ENCODE measurements at regions of chr6 and their contacts with region 1.

Region 1: DNA sequence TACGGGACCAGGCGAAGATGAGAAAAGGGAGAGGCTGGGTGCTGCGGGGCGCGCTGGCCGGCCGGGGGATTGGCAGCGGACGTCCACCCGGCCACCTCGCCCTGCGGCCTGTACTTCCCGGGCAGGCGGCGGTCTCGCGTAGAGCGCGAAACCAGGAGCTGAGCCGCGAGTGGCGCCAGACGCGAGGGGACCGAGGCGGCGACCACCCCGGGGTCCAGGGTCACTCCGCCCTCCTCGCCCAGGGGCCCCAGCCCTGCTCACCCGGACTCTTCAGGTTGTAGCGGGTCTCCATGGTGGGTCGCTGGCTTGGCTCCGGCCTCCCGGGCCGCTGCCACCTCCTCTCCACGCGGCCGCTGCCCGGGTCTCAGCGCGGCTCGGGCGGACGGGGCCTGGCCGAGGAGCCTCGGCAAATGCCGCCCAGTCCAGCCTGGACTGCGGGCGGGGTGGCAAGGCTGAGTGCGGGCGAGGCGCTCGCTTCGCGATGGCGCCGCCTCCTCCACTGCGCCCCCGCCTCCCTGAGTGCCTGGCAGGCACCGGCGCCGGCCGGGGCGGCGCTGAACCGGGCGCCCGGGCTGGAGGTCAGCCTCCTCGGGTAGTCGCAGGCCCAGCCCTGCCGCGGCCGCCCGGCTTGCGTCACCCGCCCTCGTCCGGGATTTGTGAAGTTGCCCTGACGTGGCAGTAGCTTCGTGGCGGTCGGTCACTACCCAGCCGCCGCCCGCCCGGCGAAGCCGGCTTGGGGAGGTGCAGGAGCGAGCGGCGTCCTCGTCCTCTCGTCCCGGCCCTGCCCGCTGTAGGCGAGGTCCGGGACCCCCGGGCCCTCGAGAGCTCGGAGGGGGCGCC is at the start of gene UBE2J1:
- DNase-seq: peak; percentile 88
- H3K4me3 ChIP-seq: peak within 1 kb of the TSS; percentile 84 to 91
- H3K27ac ChIP-seq: peak within 1 kb of the TSS; percentile 96 to 98
- H3K4me1 ChIP-seq: no peaks in the 10 kb centered on the region
- H3K27me3 ChIP-seq: no peaks in the 10 kb centered on the region
- CTCF ChIP-seq: no peak
- POLR2A ChIP-seq: peak; percentile 93
- total RNA-seq, gene UBE2J1: 31.7 to 98.4 TPM

Region 2: DNA sequence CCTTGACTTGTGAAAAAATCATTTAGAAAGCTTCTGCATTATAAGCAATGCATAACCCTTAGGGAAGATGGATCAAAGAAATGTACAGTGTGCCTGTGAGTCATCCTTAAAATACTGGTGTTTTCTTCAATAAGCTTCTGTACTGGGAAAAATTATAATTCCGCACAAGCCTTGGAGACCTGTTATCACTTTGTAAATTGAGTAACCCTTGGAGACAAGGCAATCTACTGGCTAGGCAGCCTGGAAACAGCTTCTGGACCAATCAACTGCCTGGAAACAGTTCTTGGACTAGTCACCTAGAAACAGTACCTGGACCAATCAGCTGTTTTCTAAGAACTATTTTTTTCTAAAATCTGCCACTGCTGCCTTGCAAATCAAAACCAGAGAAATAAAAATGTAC is 363.3 kb before region 1 on chr6:
- intact Hi-C with region 1: loop called (anchors 5 kb)
- DNase-seq: no peak
- H3K4me3 ChIP-seq: no peak overlapping the region
- H3K27ac ChIP-seq: no peak overlapping the region
- H3K4me1 ChIP-seq: no peaks in the 10 kb centered on the region
- H3K27me3 ChIP-seq: no peaks in the 10 kb centered on the region
- CTCF ChIP-seq: no peak
- POLR2A ChIP-seq: no peak

Region 3: DNA sequence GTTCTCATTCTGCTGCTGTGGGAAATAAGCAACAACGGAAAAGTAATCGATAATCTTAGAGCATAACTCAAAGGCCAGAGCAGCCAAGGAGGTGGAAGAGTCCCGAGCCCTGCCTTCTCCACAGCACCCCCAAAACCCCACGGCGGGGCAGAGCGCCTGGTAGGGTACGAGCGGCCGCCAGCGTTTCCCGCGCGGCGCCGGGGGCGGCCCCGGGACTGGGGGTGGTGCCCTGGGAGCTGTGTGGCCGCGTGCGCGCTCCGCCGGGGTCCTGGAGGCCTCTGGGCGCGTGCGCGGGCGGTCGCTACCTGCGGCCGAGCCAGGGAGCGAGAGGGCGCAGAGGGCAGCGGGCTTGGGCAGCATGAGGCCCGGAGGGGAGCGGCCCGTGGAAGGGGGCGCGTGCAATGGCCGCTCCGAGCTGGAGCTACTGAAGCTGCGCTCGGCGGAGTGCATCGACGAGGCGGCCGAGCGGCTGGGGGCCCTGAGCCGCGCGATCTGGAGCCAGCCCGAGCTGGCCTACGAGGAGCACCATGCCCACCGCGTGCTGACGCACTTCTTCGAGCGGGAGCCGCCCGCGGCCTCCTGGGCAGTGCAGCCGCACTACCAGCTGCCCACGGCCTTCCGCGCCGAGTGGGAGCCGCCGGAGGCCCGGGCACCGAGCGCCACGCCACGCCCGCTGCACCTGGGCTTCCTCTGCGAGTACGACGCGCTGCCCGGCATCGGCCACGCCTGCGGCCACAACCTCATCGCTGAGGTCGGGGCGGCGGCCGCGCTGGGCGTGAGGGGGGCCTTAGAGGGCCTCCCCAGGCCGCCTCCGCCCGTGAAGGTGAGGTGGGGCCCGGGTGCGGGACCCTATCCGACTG is 206.5 kb before region 1 on chr6 and contains the start of gene PM20D2:
- intact Hi-C with region 1: loop called (anchors 2 kb)
- DNase-seq: peak; percentile 60
- H3K4me3 ChIP-seq: peak within 1 kb of the TSS; percentile 78 to 87
- H3K27ac ChIP-seq: peak within 1 kb of the TSS; percentile 94 to 97
- H3K4me1 ChIP-seq: peaks cover 5% of the 10 kb centered on the region
- H3K27me3 ChIP-seq: no peaks in the 10 kb centered on the region
- CTCF ChIP-seq: no peak
- POLR2A ChIP-seq: peak; percentile 68
- total RNA-seq, gene PM20D2: 11.9 to 48.4 TPM